HepG2 (cell line): ENCODE measurements at regions of chr1 and their contacts with region 1.

Region 1: GRCh38 chr1:172449585-172450534 is 6.0 kb upstream of the PIGC start:
- DNase-seq: peak; percentile 85
- ATAC-seq: peak; percentile 85
- H3K4me3 ChIP-seq: peak overlapping the region; percentile 65 to 85 (median 70)
- H3K27ac ChIP-seq: peak overlapping the region; percentile 84
- H3K4me1 ChIP-seq: peaks cover 65% of the 10 kb centered on the region
- H3K27me3 ChIP-seq: no peaks in the 10 kb centered on the region; a peak in 1 of 5 replicates
- CTCF ChIP-seq: peak; percentile 90
- EP300 ChIP-seq: no peak
- POLR2A ChIP-seq: peak; percentile 54 to 76
- RAD21 ChIP-seq: peak; percentile 94

Region 2: DNA sequence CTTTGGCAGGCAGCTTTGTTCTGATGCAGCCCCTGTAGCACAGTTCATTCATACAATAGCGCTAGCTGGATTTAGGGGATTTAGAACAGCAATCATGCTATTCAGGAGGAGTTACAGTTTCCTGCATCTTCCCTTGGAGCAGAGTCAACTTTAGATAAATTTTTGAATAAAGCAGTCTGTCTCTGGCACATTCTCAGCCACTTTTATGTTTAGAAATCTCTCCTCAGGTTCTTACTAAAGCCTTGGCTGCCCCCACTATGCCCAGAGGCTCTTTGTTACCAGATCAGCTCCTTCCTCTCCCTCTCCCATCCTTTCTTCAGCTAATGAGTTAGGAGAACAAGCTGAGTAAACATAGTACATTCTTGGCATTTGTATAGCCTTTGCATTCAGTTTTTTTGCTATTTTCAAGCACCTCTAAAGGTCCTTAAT is 11.0 kb after region 1 on chr1:
- CTCF ChIA-PET with region 1: no interaction called
- POLR2A ChIA-PET with region 1: interaction called, 99 read pairs
- in situ Hi-C with region 1: no loop called
- intact Hi-C with region 1: loop called (anchors 1 kb)
- DNase-seq: no peak
- ATAC-seq: no peak
- H3K4me3 ChIP-seq: no peak overlapping the region
- H3K27ac ChIP-seq: no peak overlapping the region
- H3K4me1 ChIP-seq: 0 out of 2 replicates have a peak, but pooled peaks cover 6% of the 10 kb centered on the region
- H3K27me3 ChIP-seq: no peaks in the 10 kb centered on the region
- CTCF ChIP-seq: no peak
- EP300 ChIP-seq: no peak
- POLR2A ChIP-seq: no peak
- RAD21 ChIP-seq: no peak

Region 3: DNA sequence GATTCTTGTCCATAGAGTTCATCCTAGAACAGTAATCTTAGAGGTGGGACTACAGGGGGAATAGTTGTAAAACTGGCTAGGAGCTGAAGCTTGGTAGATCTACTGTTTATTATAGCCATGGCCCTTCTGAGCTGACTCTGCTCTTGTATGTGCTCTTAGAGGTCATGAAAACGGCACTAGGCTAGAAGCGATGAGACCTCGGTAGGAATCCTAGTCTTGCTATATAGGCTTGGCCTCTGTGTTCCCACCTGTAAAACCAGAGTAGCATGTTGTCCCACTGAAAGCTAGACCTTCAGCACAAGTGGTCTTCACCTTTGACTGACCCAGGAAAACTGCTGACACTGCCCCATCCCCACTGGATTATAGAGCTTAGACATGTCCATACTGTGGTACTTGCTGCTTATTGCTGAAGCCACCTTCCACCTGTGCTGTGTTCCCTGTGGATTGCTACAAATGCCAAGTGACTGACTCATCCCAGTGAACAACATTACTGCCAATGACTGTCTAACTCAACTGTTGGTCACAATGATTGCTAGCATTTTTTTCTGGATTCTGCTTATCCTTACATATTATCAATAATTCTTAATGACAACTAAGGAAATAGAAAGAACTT is 17.0 kb after region 1 on chr1:
- CTCF ChIA-PET with region 1: interaction called, 3 read pairs
- POLR2A ChIA-PET with region 1: interaction called, 99 read pairs
- in situ Hi-C with region 1: no loop called
- intact Hi-C with region 1: loop called (anchors 1 kb)
- DNase-seq: peak; percentile 53
- ATAC-seq: peak; percentile 68
- H3K4me3 ChIP-seq: no peak overlapping the region
- H3K27ac ChIP-seq: no peak overlapping the region
- H3K4me1 ChIP-seq: peaks cover 60% of the 10 kb centered on the region
- H3K27me3 ChIP-seq: no peaks in the 10 kb centered on the region
- CTCF ChIP-seq: no peak
- EP300 ChIP-seq: 0 out of 4 replicates have a peak, but pooled peaks of 1 of the 2 experiments have one; percentile 7
- POLR2A ChIP-seq: no peak
- RAD21 ChIP-seq: no peak

Region 4: GRCh38 chr1:172497230-172497629 is 47.4 kb after region 1 on chr1:
- CTCF ChIA-PET with region 1: interaction called, 4 read pairs
- POLR2A ChIA-PET with region 1: interaction called, 39 read pairs
- in situ Hi-C with region 1: no loop called
- intact Hi-C with region 1: loop called (anchors 1 kb)
- DNase-seq: peak; percentile 52
- ATAC-seq: peak; percentile 56
- H3K4me3 ChIP-seq: peak overlapping the region in 2 of 3 experiments; percentile 8 to 27; a peak in 1 of 6 replicates
- H3K27ac ChIP-seq: no peak overlapping the region
- H3K4me1 ChIP-seq: peaks cover 77% of the 10 kb centered on the region
- H3K27me3 ChIP-seq: no peaks in the 10 kb centered on the region
- CTCF ChIP-seq: no peak
- EP300 ChIP-seq: no peak
- POLR2A ChIP-seq: no peak
- RAD21 ChIP-seq: no peak

Region 5: DNA sequence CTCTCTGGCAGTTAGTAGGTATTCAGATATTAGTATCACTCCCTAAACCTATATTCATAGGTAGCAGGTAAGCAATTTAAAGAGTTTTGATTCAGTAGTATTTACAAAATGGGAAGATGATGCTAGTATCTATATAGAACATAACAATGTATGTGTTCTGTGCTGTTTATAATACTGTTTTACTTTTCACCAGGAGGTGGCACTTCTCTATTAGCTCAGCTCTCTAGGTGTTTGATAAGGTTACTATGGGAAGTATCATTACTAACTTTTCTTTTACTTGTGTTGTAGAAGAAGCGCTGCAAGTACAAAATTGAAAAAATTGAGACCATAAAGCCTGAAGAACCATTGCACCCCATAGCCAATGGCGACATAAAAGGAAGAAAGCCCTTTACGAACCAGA is 159.7 kb after region 1 on chr1:
- CTCF ChIA-PET with region 1: no interaction called
- POLR2A ChIA-PET with region 1: interaction called, 4 read pairs
- in situ Hi-C with region 1: no loop called
- intact Hi-C with region 1: loop called (anchors 2 kb)
- DNase-seq: peak; percentile 6
- ATAC-seq: peak; percentile 66; the same call in 2 of the 3 replicates
- H3K4me3 ChIP-seq: no peak overlapping the region
- H3K27ac ChIP-seq: no peak overlapping the region
- H3K4me1 ChIP-seq: peaks cover 18% of the 10 kb centered on the region
- H3K27me3 ChIP-seq: no peaks in the 10 kb centered on the region; a peak in 1 of 5 replicates
- CTCF ChIP-seq: no peak
- EP300 ChIP-seq: no peak
- POLR2A ChIP-seq: no peak
- RAD21 ChIP-seq: no peak

Region 6: GRCh38 chr1:172719694-172720138 is 269.9 kb after region 1 on chr1:
- CTCF ChIA-PET with region 1: interaction called, 5 read pairs
- POLR2A ChIA-PET with region 1: interaction called, 10 read pairs
- in situ Hi-C with region 1: no loop called
- intact Hi-C with region 1: loop called (anchors 1 kb)
- DNase-seq: peak; percentile 44
- ATAC-seq: peak; percentile 74; the same call in 2 of the 3 replicates
- H3K4me3 ChIP-seq: no peak overlapping the region
- H3K27ac ChIP-seq: no peak overlapping the region
- H3K4me1 ChIP-seq: peaks cover 25% of the 10 kb centered on the region
- H3K27me3 ChIP-seq: no peaks in the 10 kb centered on the region
- CTCF ChIP-seq: peak; percentile 67
- EP300 ChIP-seq: no peak
- POLR2A ChIP-seq: no peak
- RAD21 ChIP-seq: peak; percentile 30; the same call in 1 of the 2 replicates

Region 7: GRCh38 chr1:172727956-172728603 is 278.2 kb after region 1 on chr1:
- CTCF ChIA-PET with region 1: no interaction called
- POLR2A ChIA-PET with region 1: no interaction called
- in situ Hi-C with region 1: no loop called
- intact Hi-C with region 1: loop called (anchors 1 kb)
- DNase-seq: peak; percentile 71
- ATAC-seq: peak; percentile 99
- H3K4me3 ChIP-seq: no peak overlapping the region
- H3K27ac ChIP-seq: no peak overlapping the region
- H3K4me1 ChIP-seq: no peaks in the 10 kb centered on the region
- H3K27me3 ChIP-seq: no peaks in the 10 kb centered on the region
- CTCF ChIP-seq: peak; percentile 70
- EP300 ChIP-seq: no peak
- POLR2A ChIP-seq: no peak
- RAD21 ChIP-seq: peak; percentile 73